ENCODE measurements at regions of chr12 and their contacts with region 1.

Region 1: DNA sequence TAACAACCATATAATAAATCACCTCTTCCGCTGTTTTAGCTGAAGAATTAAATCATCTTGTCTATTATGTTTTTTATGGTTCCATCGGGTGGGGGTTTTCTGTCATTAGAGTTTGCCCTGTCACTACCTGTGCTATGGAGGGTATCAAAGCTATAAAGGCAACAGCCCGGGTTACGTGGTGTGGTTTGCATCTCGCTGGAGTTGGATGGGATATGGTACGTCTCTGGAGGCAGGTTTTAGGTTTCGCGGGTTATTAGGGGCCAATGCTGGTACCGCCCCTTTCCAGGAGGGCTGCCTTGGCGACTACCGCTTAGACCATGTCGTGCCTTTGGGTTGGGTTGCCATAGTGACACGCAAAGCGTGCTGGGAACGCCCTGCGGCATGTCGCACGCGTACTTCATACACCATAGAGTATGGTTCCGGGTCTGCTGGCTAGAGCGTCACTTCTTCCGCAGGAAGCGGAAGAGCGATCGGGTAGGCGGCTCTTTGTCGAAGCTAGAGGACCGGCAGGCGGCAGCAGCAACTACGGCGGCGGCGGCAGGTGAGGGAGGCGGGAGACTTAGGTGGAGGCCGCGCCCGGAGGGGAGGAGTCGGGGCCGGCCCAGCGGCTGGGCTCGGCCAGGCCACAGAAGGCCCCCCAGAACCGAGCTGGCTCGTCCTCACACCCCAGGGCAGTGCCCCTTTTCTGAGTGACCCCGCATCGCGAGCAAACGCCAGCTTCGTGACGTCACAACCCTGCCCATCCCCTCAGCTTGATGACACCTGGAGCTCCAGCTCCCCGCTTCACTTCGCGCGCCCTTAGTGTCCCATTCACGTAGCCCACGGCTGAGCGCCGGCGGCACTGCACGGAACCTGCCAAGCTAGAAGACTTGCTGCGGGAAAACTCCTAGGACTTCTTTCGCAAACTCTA is at the start of gene ZC3H10:
- DNase-seq: peak; percentile 99
- H3K4me3 Mint-ChIP-seq: peak within 1 kb of the TSS; percentile 97
- H3K27ac Mint-ChIP-seq: peak within 1 kb of the TSS; percentile 99
- H3K4me1 Mint-ChIP-seq: peaks cover 23% of the 10 kb centered on the region
- H3K27me3 Mint-ChIP-seq: no peaks in the 10 kb centered on the region
- total RNA-seq, gene ZC3H10: 6.4 to 6.6 TPM

Region 2: GRCh38 chr12:54984658-54985376 is 1133.2 kb before region 1 on chr12 and contains the start of gene TESPA1:
- CTCF ChIA-PET with region 1: no interaction called
- intact Hi-C with region 1: loop called (anchors 10 kb)
- DNase-seq: peak; percentile 94
- H3K4me3 Mint-ChIP-seq: peak within 1 kb of the TSS; percentile 75
- H3K27ac Mint-ChIP-seq: peak within 1 kb of the TSS; percentile 89
- H3K4me1 Mint-ChIP-seq: peaks cover 56% of the 10 kb centered on the region
- H3K27me3 Mint-ChIP-seq: no peaks in the 10 kb centered on the region
- total RNA-seq, gene TESPA1: 43.9 to 45.1 TPM

Region 3: DNA sequence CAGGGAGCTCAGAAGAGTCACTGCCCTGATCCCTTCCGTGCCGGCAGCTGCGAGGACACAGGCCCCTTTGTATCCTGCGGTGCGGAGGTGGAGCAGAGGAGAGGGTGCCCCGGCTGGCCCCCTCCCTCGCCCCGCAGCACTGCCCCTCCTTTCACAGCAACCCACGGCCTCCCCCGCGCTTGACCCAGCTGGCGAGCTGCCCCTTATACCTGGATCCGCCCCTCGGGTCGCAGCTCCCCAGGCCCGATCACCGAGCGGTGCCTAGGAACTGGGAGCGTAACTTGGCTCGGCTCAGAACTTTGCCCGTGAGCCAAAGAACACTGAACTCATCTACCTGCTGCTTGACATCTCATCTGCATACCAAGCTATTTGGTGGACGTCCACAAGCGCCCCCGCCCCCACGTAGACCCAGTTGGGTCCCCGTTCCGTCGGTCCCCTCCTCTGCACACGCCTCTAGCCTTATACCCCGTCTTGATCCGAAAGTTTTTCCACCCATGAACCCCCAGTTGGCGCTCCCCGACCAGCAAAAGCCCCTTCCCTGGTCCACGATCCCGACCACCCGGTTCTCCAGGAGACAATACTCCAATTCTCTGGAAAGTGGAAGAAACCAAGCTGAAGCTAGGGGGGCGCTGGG is 287.9 kb before region 1 on chr12:
- CTCF ChIA-PET with region 1: no interaction called
- intact Hi-C with region 1: loop called (anchors 2 kb)
- DNase-seq: peak; percentile 24
- H3K4me3 Mint-ChIP-seq: peak overlapping the region; percentile 96
- H3K27ac Mint-ChIP-seq: peak overlapping the region; percentile 87
- H3K4me1 Mint-ChIP-seq: peaks cover 52% of the 10 kb centered on the region
- H3K27me3 Mint-ChIP-seq: no peaks in the 10 kb centered on the region

Region 4: DNA sequence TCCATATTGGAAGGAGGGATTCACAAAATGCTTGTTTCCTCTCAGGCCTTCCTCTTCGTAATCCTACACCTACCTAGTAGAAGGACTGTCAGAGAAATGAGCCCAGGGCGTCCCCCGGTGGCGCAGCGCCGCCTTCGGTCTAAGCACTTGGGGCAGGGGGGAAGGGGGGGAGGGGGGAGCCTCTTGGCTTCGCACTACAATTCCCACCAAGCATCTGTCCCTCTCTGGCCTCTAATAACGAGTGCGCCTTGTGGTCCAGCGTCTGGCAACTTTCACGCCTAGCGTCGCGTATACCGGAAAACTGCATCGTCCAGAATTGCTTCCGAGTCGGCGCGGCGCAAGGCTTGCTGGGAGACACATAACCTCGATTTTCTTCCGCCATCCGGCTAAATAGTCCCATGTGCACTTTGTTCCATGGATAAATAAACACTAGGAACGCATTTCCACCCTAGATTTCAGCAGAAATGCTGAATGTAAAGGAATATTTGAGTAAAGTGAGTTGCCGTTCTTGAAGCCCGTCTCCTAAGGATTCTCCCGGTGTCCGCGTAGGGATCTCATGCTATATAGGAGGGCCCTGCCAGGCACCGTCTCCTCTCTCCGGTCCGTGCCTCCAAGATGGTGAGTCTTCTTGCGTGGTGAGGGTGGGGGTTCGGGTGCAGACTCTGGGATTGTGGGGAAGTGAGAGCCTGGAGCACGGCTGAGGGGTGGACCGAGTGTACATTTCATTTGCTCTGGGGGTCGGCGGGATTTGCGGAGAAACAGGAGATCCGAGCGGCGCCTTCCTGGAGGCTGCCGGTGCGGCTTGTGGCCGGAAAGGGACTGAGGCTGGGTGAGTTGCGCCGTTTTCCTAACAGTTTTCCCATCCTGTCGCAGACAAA is 76.2 kb before region 1 on chr12 and contains the start of gene RPS26:
- CTCF ChIA-PET with region 1: interaction called, 13 read pairs
- intact Hi-C with region 1: loop called (anchors 1 kb)
- DNase-seq: peak; percentile 96
- H3K4me3 Mint-ChIP-seq: peak within 1 kb of the TSS; percentile 96
- H3K27ac Mint-ChIP-seq: peak within 1 kb of the TSS; percentile 98
- H3K4me1 Mint-ChIP-seq: peaks cover 57% of the 10 kb centered on the region
- H3K27me3 Mint-ChIP-seq: no peaks in the 10 kb centered on the region
- total RNA-seq, gene RPS26: 31.0 to 37.3 TPM

Region 5: DNA sequence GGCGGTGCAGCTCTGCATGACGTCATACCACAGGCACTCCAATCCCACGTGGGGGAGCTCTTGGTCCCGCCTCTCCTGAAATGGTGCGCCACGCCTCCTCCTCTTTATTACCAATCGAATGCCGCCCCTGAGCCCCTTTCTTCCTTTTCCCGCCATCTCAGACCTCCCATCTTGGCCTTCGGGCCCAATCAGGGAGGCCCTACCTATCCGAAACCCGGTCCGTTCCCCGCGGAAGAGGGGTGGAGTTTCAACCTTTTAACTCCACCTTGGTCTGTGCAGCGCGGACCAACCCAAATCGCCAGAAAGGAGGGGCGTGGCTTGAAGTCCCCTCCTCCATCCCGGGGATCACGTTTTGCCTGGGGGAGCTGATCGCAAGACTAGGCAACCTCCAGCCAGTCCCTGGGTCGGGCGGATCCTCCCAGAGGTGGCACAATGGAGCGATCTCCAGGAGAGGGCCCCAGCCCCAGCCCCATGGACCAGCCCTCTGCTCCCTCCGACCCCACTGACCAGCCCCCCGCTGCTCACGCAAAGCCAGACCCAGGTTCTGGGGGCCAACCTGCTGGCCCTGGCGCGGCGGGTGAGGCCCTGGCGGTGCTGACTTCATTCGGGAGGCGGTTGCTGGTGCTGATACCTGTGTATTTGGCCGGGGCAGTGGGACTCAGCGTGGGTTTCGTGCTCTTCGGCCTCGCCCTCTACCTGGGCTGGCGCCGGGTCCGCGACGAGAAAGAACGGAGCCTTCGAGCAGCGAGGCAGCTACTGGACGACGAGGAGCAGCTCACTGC is 10.0 kb after region 1 on chr12 and contains the start of gene ESYT1:
- CTCF ChIA-PET with region 1: interaction called, 28 read pairs
- intact Hi-C with region 1: loop called (anchors 1 kb)
- DNase-seq: peak; percentile 99
- H3K4me3 Mint-ChIP-seq: peak within 1 kb of the TSS; percentile 91
- H3K27ac Mint-ChIP-seq: peak within 1 kb of the TSS; percentile 86
- H3K4me1 Mint-ChIP-seq: peaks cover 55% of the 10 kb centered on the region
- H3K27me3 Mint-ChIP-seq: no peaks in the 10 kb centered on the region
- total RNA-seq, gene ESYT1: 87.4 to 88.9 TPM

Region 6: GRCh38 chr12:56224102-56224701 is 106.2 kb after region 1 on chr12 and contains the start of gene NABP2:
- CTCF ChIA-PET with region 1: interaction called, 30 read pairs
- intact Hi-C with region 1: loop called (anchors 1 kb)
- DNase-seq: peak; percentile 97
- H3K4me3 Mint-ChIP-seq: peak within 1 kb of the TSS; percentile 99
- H3K27ac Mint-ChIP-seq: peak within 1 kb of the TSS; percentile 93
- H3K4me1 Mint-ChIP-seq: peaks cover 37% of the 10 kb centered on the region
- H3K27me3 Mint-ChIP-seq: no peaks in the 10 kb centered on the region
- total RNA-seq, gene NABP2: 57.4 to 59.0 TPM

Region 7: GRCh38 chr12:56448860-56449621 is 331.0 kb after region 1 on chr12 and contains the start of gene TIMELESS:
- CTCF ChIA-PET with region 1: no interaction called
- intact Hi-C with region 1: loop called (anchors 1 kb)
- DNase-seq: peak; percentile 90
- H3K4me3 Mint-ChIP-seq: peak within 1 kb of the TSS; percentile 89
- H3K27ac Mint-ChIP-seq: peak within 1 kb of the TSS; percentile 96
- H3K4me1 Mint-ChIP-seq: peaks cover 16% of the 10 kb centered on the region
- H3K27me3 Mint-ChIP-seq: no peaks in the 10 kb centered on the region
- total RNA-seq, gene TIMELESS: 69.9 to 70.8 TPM

Measured in activated naive CD4-positive, alpha-beta T cell treated with anti-CD3 and anti-CD28 coated beads for 36 hours (primary cell).